Mucosa of descending colon (tissue), 3 donors: ENCODE measurements at regions of chr11 and their contacts with region 1.

Region 1: GRCh38 chr11:124673333-124674167 is at the starts of genes SIAE and SPA17:
- DNase-seq: peak; percentile 96 to 98 (median 96)
- ATAC-seq: peak; percentile 97
- H3K4me3 ChIP-seq: peak within 1 kb of the TSS; percentile 54
- H3K4me1 ChIP-seq: peaks cover 10% of the 10 kb centered on the region
- CTCF ChIP-seq: no peak
- total RNA-seq, gene SIAE: 81.7 to 232 (median 147) TPM
- total RNA-seq, gene SPA17: 4.6 to 6.9 (median 5.8) TPM

Region 2: GRCh38 chr11:124763156-124763947 is 89.8 kb after region 1 on chr11:
- intact Hi-C with region 1: loop called in 1 of 2 experiments (anchors 5 kb)
- DNase-seq: peak; percentile 87 to 98 (median 93)
- ATAC-seq: peak; percentile 63
- H3K4me3 ChIP-seq: peak overlapping the region; percentile 32
- H3K4me1 ChIP-seq: peaks cover 30% of the 10 kb centered on the region
- CTCF ChIP-seq: peak; percentile 61

Region 3: DNA sequence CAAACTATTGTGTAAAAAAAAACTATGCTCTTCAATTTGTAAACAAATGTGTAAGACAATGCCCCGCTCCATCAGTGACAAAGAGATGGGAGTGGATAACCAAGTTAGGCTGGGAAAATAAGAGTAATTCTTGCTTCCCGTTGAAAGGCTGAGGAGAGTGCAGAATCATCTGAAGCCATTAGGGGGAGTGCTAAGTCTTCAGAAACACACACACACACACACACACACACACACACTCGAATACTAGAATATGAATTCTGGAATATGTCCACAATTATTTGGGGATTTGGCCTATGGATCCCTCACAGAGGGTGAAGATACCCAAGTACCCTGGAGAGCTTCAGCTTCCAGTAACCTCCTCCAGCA is 163.9 kb after region 1 on chr11:
- intact Hi-C with region 1: loop called (anchors 2 to 5 kb)
- DNase-seq: peak in 1 of 3 donors; percentile 46
- ATAC-seq: peak; percentile 70
- H3K4me3 ChIP-seq: no peak overlapping the region
- H3K4me1 ChIP-seq: peaks cover 12% of the 10 kb centered on the region
- CTCF ChIP-seq: no peak